ENCODE measurements at regions of chr3 and their contacts with region 1.

Region 1: GRCh38 chr3:72082186-72082715 is 297.3 kb upstream of the PROK2 start:
- DNase-seq: peak; percentile 80
- H3K4me3 ChIP-seq: peak overlapping the region; percentile 12
- H3K27ac ChIP-seq: peak overlapping the region; percentile 65
- H3K4me1 ChIP-seq: peaks cover 100% of the 10 kb centered on the region
- CTCF ChIP-seq: no peak

Region 2: DNA sequence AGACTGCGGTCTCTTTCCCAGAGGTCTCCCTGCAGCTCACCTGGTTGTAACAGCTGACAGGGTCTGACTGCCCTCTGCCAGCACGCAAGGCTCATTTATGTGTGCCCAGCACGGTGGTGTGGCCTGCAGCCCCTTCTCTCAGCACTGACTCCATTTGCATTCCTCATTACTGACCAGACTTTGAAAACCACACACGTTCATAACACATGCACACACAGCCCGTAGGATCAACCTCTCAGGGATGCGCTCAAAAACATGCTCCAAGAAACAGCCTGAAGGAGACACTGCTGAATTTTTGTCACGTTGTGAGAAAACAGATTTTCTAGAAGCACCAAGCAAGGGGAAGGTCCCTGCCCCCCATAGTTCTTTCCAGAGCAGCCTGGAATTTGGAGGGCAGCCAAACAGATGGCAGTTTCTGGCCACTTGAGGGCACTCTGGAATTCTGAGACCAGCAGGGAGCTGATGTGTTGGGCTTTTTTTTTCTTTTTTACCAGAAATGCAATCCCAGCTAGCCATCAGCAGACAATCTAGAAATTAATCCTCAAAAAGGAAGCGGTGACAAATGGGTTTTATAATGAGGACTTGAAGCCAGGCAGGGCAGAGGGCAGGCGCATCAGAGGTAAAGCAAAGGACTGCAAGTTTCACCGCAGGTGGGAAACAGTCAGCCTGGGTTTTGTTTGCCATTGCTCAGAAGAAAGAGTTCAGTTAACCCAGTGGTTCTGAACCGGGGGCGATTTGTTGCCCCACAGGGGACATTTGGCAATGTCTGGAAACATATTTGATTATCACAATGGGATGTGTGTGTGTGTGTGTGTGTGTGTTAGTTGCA is 126.8 kb before region 1 on chr3:
- CTCF ChIA-PET with region 1: no interaction called
- POLR2A ChIA-PET with region 1: interaction called, 3 read pairs
- intact Hi-C with region 1: loop called (anchors 1 kb)
- DNase-seq: peak; percentile 66
- H3K4me3 ChIP-seq: no peak overlapping the region
- H3K27ac ChIP-seq: no peak overlapping the region
- H3K4me1 ChIP-seq: peaks cover 25% of the 10 kb centered on the region
- CTCF ChIP-seq: peak; percentile 91

Region 3: DNA sequence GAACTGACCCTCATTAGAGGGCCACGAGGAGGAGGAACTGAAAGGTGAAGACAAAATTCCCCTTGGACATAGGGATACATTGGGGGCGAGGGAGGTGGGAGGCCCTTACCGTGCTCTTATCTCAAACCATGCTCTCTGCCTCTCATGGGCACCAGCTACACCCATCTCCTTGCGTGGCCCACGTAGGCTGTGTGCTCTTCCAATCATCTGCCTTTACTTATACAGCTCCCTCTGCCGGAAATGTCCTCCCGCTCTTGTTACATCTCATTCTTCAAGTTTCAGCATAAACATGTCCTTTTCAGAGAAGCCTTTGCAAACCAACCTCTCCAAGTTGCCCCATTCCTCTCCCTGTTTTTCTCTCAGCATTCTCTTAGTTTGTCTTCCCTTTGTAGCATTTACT is 10.5 kb after region 1 on chr3:
- CTCF ChIA-PET with region 1: interaction called, 8 read pairs
- POLR2A ChIA-PET with region 1: interaction called, 31 read pairs
- intact Hi-C with region 1: no loop called
- DNase-seq: peak; percentile 71
- H3K4me3 ChIP-seq: peak overlapping the region; percentile 2
- H3K27ac ChIP-seq: peak overlapping the region; percentile 53
- H3K4me1 ChIP-seq: peaks cover 76% of the 10 kb centered on the region
- CTCF ChIP-seq: peak; percentile 75

Region 4: DNA sequence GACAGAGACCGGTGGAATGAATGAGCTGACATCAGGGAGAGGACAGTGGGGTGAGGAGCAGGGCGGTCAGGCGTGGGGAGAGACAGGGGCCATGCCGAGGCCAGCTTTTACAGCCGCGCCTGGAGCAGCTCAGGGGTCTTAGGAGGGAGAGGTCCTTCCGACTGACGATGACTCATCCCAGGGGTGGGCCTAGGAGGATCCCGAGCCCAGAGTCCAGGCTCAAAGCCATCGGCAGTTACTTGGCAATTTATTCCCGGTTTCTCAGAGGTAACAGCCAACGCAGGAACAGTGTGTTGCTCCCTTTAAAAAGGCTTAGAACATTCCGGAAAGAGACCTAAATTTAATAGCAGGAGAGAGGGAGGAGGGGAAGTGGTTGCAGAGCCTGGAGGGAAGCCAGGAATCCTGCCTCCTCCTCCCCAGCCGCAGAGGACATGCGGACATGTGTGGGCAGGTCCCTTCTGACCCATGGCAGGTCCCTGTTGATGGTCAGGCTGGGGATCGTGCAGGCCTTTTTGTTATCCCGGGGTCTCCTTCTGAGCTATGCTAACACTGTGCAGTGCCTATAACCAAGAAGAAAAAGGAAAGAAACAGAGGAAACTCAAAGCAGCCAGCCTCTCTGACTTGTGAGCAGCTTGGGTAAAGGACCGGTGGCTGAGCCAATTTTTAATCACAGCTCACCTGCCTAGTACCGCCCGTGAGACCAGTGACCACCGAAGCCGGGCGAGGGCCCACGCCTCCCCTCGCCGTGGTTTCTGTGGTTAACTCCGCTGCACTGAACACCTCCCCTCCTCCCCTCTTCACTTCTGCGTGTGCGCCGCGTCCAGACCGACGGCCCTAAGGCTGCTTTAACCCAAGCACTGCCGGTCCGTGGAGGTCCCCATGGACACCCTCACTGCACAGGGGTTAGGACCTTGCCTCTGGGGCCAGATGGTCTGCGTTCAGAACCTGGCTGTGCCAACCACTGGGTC is 95.1 kb after region 1 on chr3:
- CTCF ChIA-PET with region 1: no interaction called
- POLR2A ChIA-PET with region 1: interaction called, 3 read pairs
- intact Hi-C with region 1: loop called (anchors 2 kb)
- DNase-seq: peak; percentile 64
- H3K4me3 ChIP-seq: peak overlapping the region; percentile 33
- H3K27ac ChIP-seq: peak overlapping the region; percentile 51
- H3K4me1 ChIP-seq: peaks cover 39% of the 10 kb centered on the region
- CTCF ChIP-seq: no peak

Region 5: GRCh38 chr3:72234391-72234790 is 152.1 kb after region 1 on chr3:
- CTCF ChIA-PET with region 1: no interaction called
- POLR2A ChIA-PET with region 1: no interaction called
- intact Hi-C with region 1: no loop called
- DNase-seq: no peak
- H3K4me3 ChIP-seq: no peak overlapping the region
- H3K27ac ChIP-seq: no peak overlapping the region
- H3K4me1 ChIP-seq: no peaks in the 10 kb centered on the region
- CTCF ChIP-seq: no peak

Region 6: GRCh38 chr3:72447059-72447946 is 365.1 kb after region 1 on chr3:
- CTCF ChIA-PET with region 1: no interaction called
- POLR2A ChIA-PET with region 1: interaction called, 4 read pairs
- intact Hi-C with region 1: loop called (anchors 5 kb)
- DNase-seq: peak; percentile 92
- H3K4me3 ChIP-seq: peak overlapping the region; percentile 86
- H3K27ac ChIP-seq: no peak overlapping the region
- H3K4me1 ChIP-seq: peaks cover 42% of the 10 kb centered on the region
- CTCF ChIP-seq: no peak

Measured in OCI-LY7 (cell line).